HAP-1 (cell line): ENCODE measurements at regions of chr1 and their contacts with region 1.

Region 1: DNA sequence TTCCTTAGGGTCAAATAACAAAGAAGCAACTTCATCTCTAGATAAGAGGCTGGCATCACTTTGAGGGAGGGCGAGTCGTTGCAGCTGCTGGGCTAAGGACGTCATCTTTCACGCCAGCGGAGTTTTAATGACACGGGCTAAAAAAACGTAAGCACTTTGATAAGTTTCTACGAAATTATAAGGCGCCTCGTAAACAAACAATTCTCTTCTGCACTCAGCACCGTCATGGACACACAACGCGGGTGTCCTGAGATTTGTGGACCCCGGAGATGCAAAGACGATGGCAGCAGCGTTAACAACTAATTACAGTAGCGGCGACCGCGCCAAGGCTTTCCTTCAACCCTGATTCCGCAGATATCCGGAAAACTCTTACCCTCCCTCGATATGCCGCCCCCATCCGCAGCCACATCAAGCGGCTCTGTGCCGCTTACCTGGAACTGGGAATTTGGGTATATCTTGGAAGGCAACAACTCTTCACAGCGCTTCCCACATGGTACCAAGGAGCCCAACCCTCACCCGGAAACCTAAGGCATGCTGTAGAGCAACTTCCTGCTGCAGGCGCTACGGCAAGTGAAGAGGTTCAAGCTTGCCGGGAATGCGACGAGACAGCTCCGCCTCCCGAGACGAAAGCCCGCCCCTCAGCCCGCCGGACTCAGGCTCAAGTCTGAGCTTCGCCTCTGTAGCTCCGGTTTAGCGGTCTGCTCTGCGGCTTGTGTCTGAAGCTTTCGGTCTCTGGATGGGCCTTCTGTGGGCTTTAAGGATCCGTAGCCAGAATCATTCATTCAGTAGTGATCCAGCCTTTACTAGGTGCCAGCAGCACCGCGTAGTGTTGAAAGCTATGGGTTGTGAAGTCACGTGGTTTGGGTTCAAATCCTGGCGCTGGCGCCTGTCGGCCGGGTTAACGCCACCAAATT is at the start of gene HEATR1:
- DNase-seq: peak; percentile 92 to 97
- H3K4me3 ChIP-seq: peak within 1 kb of the TSS; percentile 84
- H3K4me1 ChIP-seq: peaks cover 9% of the 10 kb centered on the region
- H3K27me3 ChIP-seq: no peaks in the 10 kb centered on the region

Region 2: GRCh38 chr1:236365999-236366570 is 238.2 kb before region 1 on chr1:
- in situ Hi-C with region 1: no loop called
- DNase-seq: no peak
- H3K4me3 ChIP-seq: no peak overlapping the region
- H3K4me1 ChIP-seq: no peaks in the 10 kb centered on the region
- H3K27me3 ChIP-seq: no peaks in the 10 kb centered on the region

Region 3: GRCh38 chr1:236868625-236869467 is 264.6 kb after region 1 on chr1:
- in situ Hi-C with region 1: loop called (anchors 25 kb)
- DNase-seq: peak; percentile 28 to 49
- H3K4me3 ChIP-seq: no peak overlapping the region
- H3K4me1 ChIP-seq: no peaks in the 10 kb centered on the region; the same call in 1 of the 2 replicates
- H3K27me3 ChIP-seq: no peaks in the 10 kb centered on the region

Region 4: DNA sequence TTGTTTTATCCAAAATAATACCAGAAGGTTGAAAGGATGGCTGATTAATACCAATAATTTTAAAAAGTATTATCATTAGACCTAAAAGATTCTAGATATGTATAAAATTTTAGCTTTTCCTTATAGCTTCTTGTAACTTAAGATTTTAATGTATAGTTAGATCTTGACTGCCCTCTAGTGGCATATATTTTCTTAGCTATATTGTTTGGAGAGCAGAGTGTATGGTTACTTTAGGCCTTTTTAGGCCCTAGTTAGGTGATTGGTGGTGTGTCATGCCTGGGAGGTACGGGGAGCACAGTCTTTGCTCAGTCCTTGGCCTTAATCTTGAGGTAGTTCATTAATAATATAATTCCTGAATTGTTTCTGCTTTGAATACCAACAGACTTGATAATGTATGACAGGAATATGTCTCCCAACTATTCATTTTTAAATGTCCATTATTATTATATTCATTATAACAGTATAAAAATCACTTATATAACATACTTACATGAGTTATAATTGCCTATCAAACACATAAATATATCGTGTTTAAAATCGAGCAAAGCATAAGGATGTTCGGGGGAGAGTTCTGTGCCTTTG is 958.1 kb after region 1 on chr1:
- in situ Hi-C with region 1: loop called (anchors 25 kb)
- DNase-seq: peak; percentile 35 to 79
- H3K4me3 ChIP-seq: no peak overlapping the region
- H3K4me1 ChIP-seq: no peaks in the 10 kb centered on the region
- H3K27me3 ChIP-seq: no peaks in the 10 kb centered on the region